ENCODE measurements at regions of chr5 and their contacts with region 1.

Region 1: GRCh38 chr5:95027151-95027721 is 257.7 kb downstream of the MCTP1 start:
- DNase-seq: peak; percentile 71 to 97 (median 94)
- H3K4me3 ChIP-seq: peak overlapping the region in 6 of 7 experiments; percentile 27 to 73 (median 50)
- H3K27ac ChIP-seq: peak overlapping the region; percentile 41 to 69
- H3K4me1 ChIP-seq: peaks cover 17 to 65% (median 52%) of the 10 kb centered on the region in 4 experiments
- H3K27me3 ChIP-seq: no peaks in the 10 kb centered on the region

Region 2: GRCh38 chr5:95043234-95043633 is 16.0 kb after region 1 on chr5:
- CTCF ChIA-PET with region 1: interaction called, 24 read pairs
- POLR2A ChIA-PET with region 1: interaction called, 5 read pairs
- DNase-seq: peak in 2 of 3 donors; percentile 41 to 55
- H3K4me3 ChIP-seq: no peak overlapping the region
- H3K27ac ChIP-seq: no peak overlapping the region
- H3K4me1 ChIP-seq: peaks cover 10 to 33% (median 16%) of the 10 kb centered on the region in 4 experiments
- H3K27me3 ChIP-seq: no peaks in the 10 kb centered on the region